Activated naive CD8-positive, alpha-beta T cell treated with anti-CD3 and anti-CD28 coated beads, Interleukin-2, amount 10 ng/mL, durations not matched to agents 7 days and 5 days (primary cell): ENCODE measurements at regions of chr3 and their contacts with region 1.

Region 1: GRCh38 chr3:128123538-128124368 is at the start of gene RUVBL1:
- DNase-seq: peak; percentile 93
- ATAC-seq: peak; percentile 99
- H3K4me3 Mint-ChIP-seq: peak within 1 kb of the TSS; percentile 98
- H3K27ac Mint-ChIP-seq: peak within 1 kb of the TSS; percentile 94
- H3K4me1 Mint-ChIP-seq: peaks cover 22% of the 10 kb centered on the region
- H3K27me3 Mint-ChIP-seq: no peaks in the 10 kb centered on the region
- total RNA-seq, gene RUVBL1: 37.0 to 37.2 TPM

Region 2: DNA sequence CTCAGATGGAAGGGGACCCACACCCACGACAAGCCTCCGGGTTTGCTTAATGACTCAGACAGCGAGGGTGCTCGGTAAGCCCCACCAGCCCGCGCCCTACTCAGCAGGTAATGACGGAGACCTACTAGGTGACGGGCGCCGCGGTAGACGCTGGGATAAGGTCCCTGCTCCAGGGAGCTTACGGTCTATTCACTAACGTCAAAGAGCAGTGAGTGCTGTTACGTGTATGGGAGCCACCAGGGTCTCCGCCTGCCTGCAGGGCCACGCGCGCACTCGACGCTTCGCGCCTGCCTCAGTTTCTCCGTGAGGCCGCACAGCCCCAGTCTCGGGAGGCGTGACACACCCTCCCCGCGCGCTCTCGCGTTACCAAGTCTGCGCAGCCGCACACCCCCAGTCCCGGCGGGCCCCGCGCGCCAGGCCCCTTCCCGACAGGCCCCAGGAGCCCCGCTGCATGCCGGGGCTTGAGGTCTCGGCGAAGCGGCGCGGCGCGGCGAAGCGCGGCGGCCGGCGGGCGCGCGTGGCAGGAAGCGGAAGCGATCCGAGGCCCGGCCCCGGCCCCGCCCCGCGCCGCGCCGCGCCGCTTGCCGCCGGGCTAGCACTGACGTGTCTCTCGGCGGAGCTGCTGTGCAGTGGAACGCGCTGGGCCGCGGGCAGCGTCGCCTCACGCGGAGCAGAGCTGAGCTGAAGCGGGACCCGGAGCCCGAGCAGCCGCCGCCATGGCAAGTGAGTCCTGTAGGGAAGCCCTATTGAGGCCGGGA is 71.7 kb before region 1 on chr3 and contains the start of gene SEC61A1:
- POLR2A ChIA-PET with region 1: interaction called, 14 read pairs
- DNase-seq: peak; percentile 97
- ATAC-seq: peak; percentile 98
- H3K4me3 Mint-ChIP-seq: peak within 1 kb of the TSS; percentile 94
- H3K27ac Mint-ChIP-seq: peak within 1 kb of the TSS; percentile 92
- H3K4me1 Mint-ChIP-seq: peaks cover 31% of the 10 kb centered on the region
- H3K27me3 Mint-ChIP-seq: peaks cover 7% of the 10 kb centered on the region
- total RNA-seq, gene SEC61A1: 119 to 126 TPM

Region 3: GRCh38 chr3:128064962-128065361 is 58.8 kb before region 1 on chr3:
- POLR2A ChIA-PET with region 1: no interaction called
- DNase-seq: no peak
- ATAC-seq: no peak
- H3K4me3 Mint-ChIP-seq: no peak overlapping the region
- H3K27ac Mint-ChIP-seq: no peak overlapping the region
- H3K4me1 Mint-ChIP-seq: peaks cover 11% of the 10 kb centered on the region
- H3K27me3 Mint-ChIP-seq: no peaks in the 10 kb centered on the region

Region 4: GRCh38 chr3:128095222-128095703 is 28.5 kb before region 1 on chr3:
- POLR2A ChIA-PET with region 1: interaction called, 13 read pairs
- DNase-seq: peak; percentile 83
- ATAC-seq: peak; percentile 95
- H3K4me3 Mint-ChIP-seq: peak overlapping the region; percentile 26
- H3K27ac Mint-ChIP-seq: peak overlapping the region; percentile 72
- H3K4me1 Mint-ChIP-seq: peaks cover 19% of the 10 kb centered on the region
- H3K27me3 Mint-ChIP-seq: no peaks in the 10 kb centered on the region

Region 5: DNA sequence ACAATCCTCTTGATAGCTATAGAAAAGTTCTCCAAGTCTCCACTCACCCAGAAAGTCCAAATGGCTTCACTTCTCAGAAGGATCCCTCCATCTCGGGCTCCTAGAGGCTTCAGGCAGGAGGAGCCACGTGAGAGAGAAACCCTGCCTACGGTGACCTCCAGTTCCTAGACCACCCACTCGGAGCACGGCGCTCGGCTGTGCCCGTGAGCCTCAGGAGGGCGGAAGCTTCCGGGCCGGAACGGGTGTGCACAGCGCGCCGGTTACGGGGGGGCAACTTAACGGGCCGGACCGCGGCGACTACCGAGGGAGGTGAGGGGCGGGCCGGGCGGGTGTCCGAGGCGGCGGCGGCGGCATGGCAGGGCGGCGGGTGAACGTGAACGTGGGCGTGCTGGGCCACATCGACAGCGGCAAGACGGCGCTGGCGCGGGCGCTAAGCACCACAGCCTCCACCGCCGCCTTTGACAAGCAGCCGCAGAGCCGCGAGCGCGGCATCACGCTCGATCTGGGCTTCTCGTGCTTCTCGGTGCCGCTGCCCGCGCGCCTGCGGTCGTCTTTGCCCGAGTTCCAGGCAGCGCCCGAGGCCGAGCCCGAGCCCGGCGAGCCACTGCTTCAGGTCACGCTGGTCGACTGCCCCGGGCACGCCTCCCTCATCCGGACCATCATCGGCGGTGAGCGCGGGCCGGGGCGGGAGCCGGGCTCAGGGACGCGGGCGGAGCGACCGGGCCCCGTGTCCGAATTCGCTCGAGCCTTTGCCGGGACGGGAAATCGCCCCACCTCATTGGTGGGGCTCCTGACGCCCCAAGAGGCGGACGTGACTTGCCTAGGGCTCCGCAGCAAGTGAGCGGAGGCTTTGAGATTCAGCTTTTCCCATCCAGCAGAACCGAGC is 29.6 kb after region 1 on chr3 and contains the start of gene EEFSEC:
- POLR2A ChIA-PET with region 1: interaction called, 24 read pairs
- DNase-seq: peak; percentile 90
- ATAC-seq: peak; percentile 93
- H3K4me3 Mint-ChIP-seq: peak within 1 kb of the TSS; percentile 95
- H3K27ac Mint-ChIP-seq: peak within 1 kb of the TSS; percentile 96
- H3K4me1 Mint-ChIP-seq: peaks cover 9% of the 10 kb centered on the region
- H3K27me3 Mint-ChIP-seq: no peaks in the 10 kb centered on the region
- total RNA-seq, gene EEFSEC: 22.1 to 22.7 TPM

Region 6: DNA sequence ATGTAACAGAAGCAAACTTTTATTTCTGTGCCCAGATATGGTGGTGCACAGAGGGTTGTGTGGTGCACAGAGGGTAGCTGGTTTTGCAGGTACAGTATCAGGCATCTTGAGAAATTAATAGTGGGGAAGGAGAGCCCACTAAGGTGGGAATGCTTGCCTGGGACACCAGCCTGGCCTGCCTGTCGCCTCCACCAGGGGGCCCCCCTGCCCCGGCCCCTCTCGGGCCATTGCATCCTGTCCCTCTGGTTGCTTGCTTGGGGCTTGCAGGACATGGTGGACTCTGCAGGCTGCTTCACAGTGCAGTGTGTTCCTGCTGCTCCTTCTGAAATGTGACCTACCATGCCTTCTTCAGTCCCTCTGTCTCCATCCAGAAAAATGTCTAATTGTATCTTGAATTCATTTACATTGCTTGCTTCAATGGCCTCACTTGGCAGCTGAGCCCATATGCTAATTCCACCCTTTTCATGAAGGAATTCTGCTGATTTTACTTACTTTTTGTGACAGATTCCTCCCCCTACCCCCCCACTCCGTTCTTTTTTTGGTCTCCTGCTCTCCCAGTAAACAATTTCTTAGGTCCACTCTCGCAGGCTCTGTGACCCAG is 103.1 kb after region 1 on chr3:
- POLR2A ChIA-PET with region 1: no interaction called
- DNase-seq: peak; percentile 47
- ATAC-seq: peak; percentile 58
- H3K4me3 Mint-ChIP-seq: no peak overlapping the region
- H3K27ac Mint-ChIP-seq: no peak overlapping the region
- H3K4me1 Mint-ChIP-seq: peaks cover 3% of the 10 kb centered on the region
- H3K27me3 Mint-ChIP-seq: no peaks in the 10 kb centered on the region